T-cell (primary cell): ENCODE measurements at regions of chr6 and their contacts with region 1.

Region 1: GRCh38 chr6:129575378-129576118 is 134.4 kb downstream of the ARHGAP18 start:
- DNase-seq: peak in 1 of 35 experiments; percentile 51
- ATAC-seq: no peak
- H3K4me3 ChIP-seq: peak overlapping the region in 1 of 2 donors; percentile 10
- H3K4me3 Mint-ChIP-seq: peak overlapping the region; percentile 37 to 57 (median 50)
- H3K27ac ChIP-seq: no peak overlapping the region
- H3K27ac Mint-ChIP-seq: no peak overlapping the region
- H3K4me1 ChIP-seq: no peaks in the 10 kb centered on the region
- H3K4me1 Mint-ChIP-seq: peaks cover 5 to 10% (median 7%) of the 10 kb centered on the region in 3 donors
- H3K27me3 ChIP-seq: no peaks in the 10 kb centered on the region
- H3K27me3 Mint-ChIP-seq: no peaks in the 10 kb centered on the region

Region 2: GRCh38 chr6:129140526-129140925 is 435.0 kb before region 1 on chr6:
- CTCF ChIA-PET with region 1: no interaction called
- POLR2A ChIA-PET with region 1: no interaction called
- DNase-seq: no peak
- ATAC-seq: no peak
- H3K4me3 ChIP-seq: no peak overlapping the region
- H3K4me3 Mint-ChIP-seq: no peak overlapping the region
- H3K27ac ChIP-seq: no peak overlapping the region
- H3K27ac Mint-ChIP-seq: no peak overlapping the region
- H3K4me1 ChIP-seq: no peaks in the 10 kb centered on the region
- H3K4me1 Mint-ChIP-seq: no peaks in the 10 kb centered on the region
- H3K27me3 ChIP-seq: no peaks in the 10 kb centered on the region
- H3K27me3 Mint-ChIP-seq: peaks cover 4 to 6% of the 10 kb centered on the region in 2 donors

Region 3: GRCh38 chr6:129543981-129544380 is 31.6 kb before region 1 on chr6:
- CTCF ChIA-PET with region 1: no interaction called
- POLR2A ChIA-PET with region 1: no interaction called
- DNase-seq: no peak
- ATAC-seq: no peak
- H3K4me3 ChIP-seq: no peak overlapping the region
- H3K4me3 Mint-ChIP-seq: no peak overlapping the region
- H3K27ac ChIP-seq: no peak overlapping the region
- H3K27ac Mint-ChIP-seq: no peak overlapping the region
- H3K4me1 ChIP-seq: no peaks in the 10 kb centered on the region
- H3K4me1 Mint-ChIP-seq: no peaks in the 10 kb centered on the region
- H3K27me3 ChIP-seq: no peaks in the 10 kb centered on the region
- H3K27me3 Mint-ChIP-seq: no peaks in the 10 kb centered on the region

Region 4: GRCh38 chr6:130054725-130055124 is 479.2 kb after region 1 on chr6:
- CTCF ChIA-PET with region 1: no interaction called
- POLR2A ChIA-PET with region 1: interaction called in 1 of 2 experiments, 12 read pairs
- DNase-seq: no peak
- ATAC-seq: no peak
- H3K4me3 ChIP-seq: no peak overlapping the region
- H3K4me3 Mint-ChIP-seq: no peak overlapping the region
- H3K27ac ChIP-seq: no peak overlapping the region
- H3K27ac Mint-ChIP-seq: peak overlapping the region; percentile 9 to 13
- H3K4me1 ChIP-seq: peaks cover 0 to 5% of the 10 kb centered on the region in 2 experiments
- H3K4me1 Mint-ChIP-seq: peaks cover 12 to 30% (median 25%) of the 10 kb centered on the region in 3 donors
- H3K27me3 ChIP-seq: no peaks in the 10 kb centered on the region
- H3K27me3 Mint-ChIP-seq: no peaks in the 10 kb centered on the region

Region 5: GRCh38 chr6:130200020-130200419 is 624.5 kb after region 1 on chr6:
- CTCF ChIA-PET with region 1: no interaction called
- POLR2A ChIA-PET with region 1: interaction called in 1 of 2 experiments, 10 read pairs
- DNase-seq: no peak
- ATAC-seq: no peak
- H3K4me3 ChIP-seq: no peak overlapping the region
- H3K4me3 Mint-ChIP-seq: no peak overlapping the region
- H3K27ac ChIP-seq: no peak overlapping the region
- H3K27ac Mint-ChIP-seq: peak overlapping the region in 1 of 2 donors; percentile 42
- H3K4me1 ChIP-seq: peaks cover 0 to 31% of the 10 kb centered on the region in 2 experiments
- H3K4me1 Mint-ChIP-seq: peaks cover 69 to 77% (median 72%) of the 10 kb centered on the region in 3 donors
- H3K27me3 ChIP-seq: no peaks in the 10 kb centered on the region
- H3K27me3 Mint-ChIP-seq: no peaks in the 10 kb centered on the region